ENCODE measurements at regions of chr12 and their contacts with region 1.

Region 1: DNA sequence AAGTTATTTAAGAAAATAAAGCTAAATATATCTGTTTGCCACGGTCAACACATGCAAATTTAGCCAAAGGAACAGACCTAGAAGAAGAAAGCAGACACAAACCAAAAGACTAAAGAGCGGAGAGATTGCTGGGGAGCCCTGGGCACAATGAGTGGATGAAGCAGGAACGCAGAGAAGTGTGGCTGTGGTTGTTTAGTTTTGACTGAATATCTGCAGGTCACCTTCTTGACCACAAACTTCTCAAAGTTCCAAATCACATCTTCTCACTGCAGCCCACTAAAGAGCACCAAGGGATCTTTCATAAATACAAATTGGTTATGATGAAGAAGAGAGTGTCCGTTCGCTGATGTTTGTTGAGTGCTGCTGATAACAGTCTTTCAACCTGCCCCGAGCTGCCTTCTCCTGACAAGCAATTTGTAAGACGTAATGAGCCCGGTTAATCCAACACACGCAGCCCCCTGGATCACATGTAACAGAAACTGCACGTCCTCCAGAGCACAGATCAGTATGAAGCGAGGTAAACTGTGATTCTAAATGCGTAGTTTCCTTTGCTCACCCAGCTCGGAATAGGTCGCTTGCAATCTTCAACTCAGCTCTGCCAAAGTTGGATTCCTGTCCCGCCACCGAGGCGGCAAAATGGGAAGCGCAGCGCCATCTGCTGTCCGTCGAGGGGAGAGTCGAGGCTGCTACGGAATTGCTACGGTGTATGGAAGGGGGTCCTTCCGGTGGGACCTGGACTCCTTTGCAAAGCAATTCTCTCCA is 120.8 kb downstream of the GXYLT1 start:
- DNase-seq: peak; percentile 35
- ATAC-seq: peak; percentile 93
- H3K4me3 ChIP-seq: peak overlapping the region; percentile 8 to 29; a peak in 2 of 4 replicates
- H3K27ac ChIP-seq: no peak overlapping the region
- H3K4me1 ChIP-seq: peaks cover 4% of the 10 kb centered on the region; the same call in 1 of the 2 replicates
- H3K27me3 ChIP-seq: no peaks in the 10 kb centered on the region
- CTCF ChIP-seq: peak; percentile 93

Region 2: GRCh38 chr12:41277116-41277945 is 746.6 kb before region 1 on chr12:
- CTCF ChIA-PET with region 1: interaction called, 14 read pairs
- POLR2A ChIA-PET with region 1: no interaction called
- in situ Hi-C with region 1: no loop called
- intact Hi-C with region 1: loop called (anchors 2 kb)
- DNase-seq: peak; percentile 24
- ATAC-seq: no peak
- H3K4me3 ChIP-seq: no peak overlapping the region
- H3K27ac ChIP-seq: no peak overlapping the region
- H3K4me1 ChIP-seq: no peaks in the 10 kb centered on the region
- H3K27me3 ChIP-seq: no peaks in the 10 kb centered on the region
- CTCF ChIP-seq: peak; percentile 70

Region 3: GRCh38 chr12:41344776-41345470 is 679.0 kb before region 1 on chr12:
- CTCF ChIA-PET with region 1: no interaction called
- POLR2A ChIA-PET with region 1: no interaction called
- in situ Hi-C with region 1: no loop called
- intact Hi-C with region 1: no loop called
- DNase-seq: no peak
- ATAC-seq: no peak
- H3K4me3 ChIP-seq: no peak overlapping the region
- H3K27ac ChIP-seq: no peak overlapping the region
- H3K4me1 ChIP-seq: no peaks in the 10 kb centered on the region
- H3K27me3 ChIP-seq: no peaks in the 10 kb centered on the region
- CTCF ChIP-seq: no peak

Region 4: DNA sequence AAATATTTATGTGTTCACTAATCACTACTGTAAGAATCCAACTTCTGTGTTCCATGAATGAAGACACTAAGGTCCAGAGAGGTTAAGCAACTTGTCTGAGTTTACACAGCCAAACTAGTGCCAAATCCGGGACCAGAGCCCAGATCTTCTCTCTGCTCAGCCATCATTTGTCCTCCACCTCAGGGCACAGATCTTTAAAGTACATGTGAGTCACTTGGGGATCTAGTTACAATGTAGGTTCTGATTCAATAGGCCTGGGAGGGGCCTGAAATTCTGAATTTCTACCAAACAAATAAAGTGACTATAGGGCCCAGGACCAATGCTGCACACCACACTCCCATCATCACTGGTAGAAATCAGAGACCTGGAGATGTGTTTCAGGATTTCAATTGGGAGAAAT is 42.2 kb before region 1 on chr12:
- CTCF ChIA-PET with region 1: no interaction called
- POLR2A ChIA-PET with region 1: no interaction called
- in situ Hi-C with region 1: no loop called
- intact Hi-C with region 1: no loop called
- DNase-seq: no peak
- ATAC-seq: no peak
- H3K4me3 ChIP-seq: no peak overlapping the region
- H3K27ac ChIP-seq: no peak overlapping the region
- H3K4me1 ChIP-seq: no peaks in the 10 kb centered on the region
- H3K27me3 ChIP-seq: no peaks in the 10 kb centered on the region; the same call in 1 of the 2 replicates
- CTCF ChIP-seq: no peak

Region 5: GRCh38 chr12:42315108-42315507 is 291.2 kb after region 1 on chr12:
- CTCF ChIA-PET with region 1: no interaction called
- POLR2A ChIA-PET with region 1: no interaction called
- in situ Hi-C with region 1: no loop called
- intact Hi-C with region 1: no loop called
- DNase-seq: no peak
- ATAC-seq: no peak
- H3K4me3 ChIP-seq: no peak overlapping the region
- H3K27ac ChIP-seq: no peak overlapping the region
- H3K4me1 ChIP-seq: no peaks in the 10 kb centered on the region
- H3K27me3 ChIP-seq: no peaks in the 10 kb centered on the region
- CTCF ChIP-seq: no peak

Region 6: GRCh38 chr12:42893802-42894201 is 869.9 kb after region 1 on chr12:
- CTCF ChIA-PET with region 1: no interaction called
- POLR2A ChIA-PET with region 1: no interaction called
- in situ Hi-C with region 1: no loop called
- intact Hi-C with region 1: no loop called
- DNase-seq: no peak
- ATAC-seq: no peak
- H3K4me3 ChIP-seq: no peak overlapping the region
- H3K27ac ChIP-seq: no peak overlapping the region
- H3K4me1 ChIP-seq: no peaks in the 10 kb centered on the region
- H3K27me3 ChIP-seq: no peaks in the 10 kb centered on the region
- CTCF ChIP-seq: no peak